Stomach (tissue), 19 donors: ENCODE measurements at regions of chr11 and their contacts with region 1.

Region 1: GRCh38 chr11:60899046-60899936 is 7.1 kb downstream of the PRPF19 start:
- DNase-seq: peak; percentile 39 to 85
- H3K4me3 ChIP-seq: no peak overlapping the region
- H3K27ac ChIP-seq: peak overlapping the region in 1 of 5 donors; percentile 17
- H3K4me1 ChIP-seq: peaks cover 5 to 16% (median 9%) of the 10 kb centered on the region in 4 donors
- H3K27me3 ChIP-seq: no peaks in the 10 kb centered on the region
- CTCF ChIP-seq: peak in 5 of 7 experiments; percentile 85 to 95 (median 93)
- EP300 ChIP-seq: no peak
- POLR2A ChIP-seq: no peak

Region 2: DNA sequence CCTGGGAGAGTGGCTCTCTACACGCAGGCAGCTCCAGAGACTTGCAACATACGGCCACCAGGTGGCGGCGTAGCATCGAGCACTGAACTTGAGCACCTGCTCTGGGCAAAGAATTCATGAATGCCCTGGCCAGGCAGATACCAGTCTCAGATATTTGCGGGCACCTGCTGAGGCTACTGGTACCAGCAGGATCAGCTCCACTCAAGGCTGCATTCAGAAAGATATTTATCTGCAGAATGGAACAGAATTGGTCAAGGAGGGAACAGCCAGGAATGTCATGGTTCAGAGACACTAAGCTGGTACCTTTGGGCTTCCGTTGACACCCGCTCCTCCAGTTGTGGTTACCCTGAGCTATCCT is 68.2 kb before region 1 on chr11:
- intact Hi-C with region 1: loop called (anchors 5 kb)
- DNase-seq: peak; percentile 91 to 93
- H3K4me3 ChIP-seq: no peak overlapping the region
- H3K27ac ChIP-seq: peak overlapping the region in 1 of 5 donors; percentile 43
- H3K4me1 ChIP-seq: peaks cover 7 to 10% (median 9%) of the 10 kb centered on the region in 4 donors
- H3K27me3 ChIP-seq: no peaks in the 10 kb centered on the region
- CTCF ChIP-seq: peak in 5 of 7 experiments; percentile 90 to 96 (median 92)
- EP300 ChIP-seq: no peak
- POLR2A ChIP-seq: no peak